ENCODE measurements at regions of chr12 and their contacts with region 1.

Region 1: DNA sequence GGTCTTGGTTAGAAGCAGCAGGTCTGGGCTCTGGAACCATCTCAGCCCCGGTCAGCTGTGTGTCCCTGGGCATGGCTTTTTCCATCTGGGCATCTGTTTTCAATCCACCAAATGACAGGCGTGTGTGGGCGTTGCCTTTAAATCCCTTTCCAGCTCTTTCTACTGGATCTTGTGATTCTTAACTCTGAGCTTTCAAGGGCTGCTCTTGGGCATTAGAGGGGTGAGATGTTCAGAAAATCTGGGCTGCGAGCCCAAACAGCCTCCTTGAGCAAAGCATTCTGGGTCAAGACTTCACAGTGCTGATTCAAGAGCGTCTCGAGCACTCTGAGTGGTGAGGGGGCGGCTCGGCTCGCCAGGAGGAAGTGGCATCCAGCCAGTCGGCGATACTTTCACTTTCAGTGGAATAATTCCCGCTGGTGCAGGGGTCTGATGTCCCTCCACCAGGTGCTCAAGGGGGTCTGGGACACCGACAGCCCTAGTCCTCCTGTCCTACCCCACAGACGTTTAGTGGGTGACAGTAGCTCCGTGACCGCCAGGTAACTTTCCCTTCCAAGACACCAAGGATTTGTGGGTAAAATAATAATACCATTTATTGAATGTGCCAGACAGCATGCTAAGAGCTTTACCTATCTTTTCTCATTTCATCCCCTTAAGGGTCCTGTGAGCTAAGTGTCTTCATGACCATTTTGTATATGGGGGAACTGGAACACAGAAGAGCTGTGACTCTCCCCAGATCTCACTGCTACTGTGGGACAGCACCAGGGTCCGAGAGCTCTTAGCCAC is 114.0 kb downstream of the PLXNC1 start:
- DNase-seq: peak; percentile 50 to 81 (median 72)
- ATAC-seq: peak; percentile 89
- H3K4me3 ChIP-seq: peak overlapping the region; percentile 94
- H3K4me3 Mint-ChIP-seq: peak overlapping the region; percentile 80 to 99 (median 97)
- H3K27ac ChIP-seq: peak overlapping the region; percentile 91
- H3K27ac Mint-ChIP-seq: peak overlapping the region; percentile 91 to 100 (median 99)
- H3K4me1 ChIP-seq: peaks cover 15 to 18% of the 10 kb centered on the region in 2 donors
- H3K4me1 Mint-ChIP-seq: peaks cover 23 to 52% (median 46%) of the 10 kb centered on the region in 7 donors
- H3K27me3 ChIP-seq: no peaks in the 10 kb centered on the region
- H3K27me3 Mint-ChIP-seq: no peaks in the 10 kb centered on the region

Region 2: DNA sequence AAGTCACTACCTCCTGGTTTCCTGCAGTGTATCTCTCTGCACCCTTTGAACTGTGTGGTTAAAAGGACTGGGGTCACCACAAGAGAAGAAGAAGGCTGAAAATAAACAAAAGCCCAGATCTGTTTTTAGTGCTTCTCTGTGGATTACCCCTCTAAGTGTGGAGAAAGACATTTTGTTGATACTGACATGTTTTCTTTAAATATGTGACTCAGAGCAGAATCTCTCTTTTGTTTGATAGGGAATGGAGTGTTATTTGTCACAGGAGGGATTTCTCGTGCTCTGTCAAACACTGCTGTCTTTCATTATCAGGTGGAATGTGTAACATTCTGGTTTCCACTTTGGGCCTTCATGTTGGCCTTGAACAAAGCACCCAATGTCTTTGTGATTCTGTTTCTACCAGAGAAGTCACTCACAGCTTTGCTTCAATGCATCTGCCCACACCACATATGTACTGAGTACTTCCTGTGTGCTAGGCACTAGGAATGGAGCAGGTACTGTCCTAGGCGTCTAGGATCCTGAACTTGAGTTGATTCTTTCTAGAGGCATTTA is 32.0 kb before region 1 on chr12:
- CTCF ChIA-PET with region 1: no interaction called
- POLR2A ChIA-PET with region 1: no interaction called
- intact Hi-C with region 1: loop called in 1 of 2 experiments (anchors 2 kb)
- DNase-seq: peak in 3 of 9 donors; percentile 3 to 16 (median 5)
- ATAC-seq: peak; percentile 52
- H3K4me3 ChIP-seq: no peak overlapping the region
- H3K4me3 Mint-ChIP-seq: peak overlapping the region in 8 of 10 donors; percentile 4 to 71 (median 47)
- H3K27ac ChIP-seq: no peak overlapping the region
- H3K27ac Mint-ChIP-seq: peak overlapping the region in 6 of 9 donors; percentile 55 to 82 (median 68)
- H3K4me1 ChIP-seq: peaks cover 6 to 10% of the 10 kb centered on the region in 2 donors
- H3K4me1 Mint-ChIP-seq: peaks cover 6 to 27% (median 13%) of the 10 kb centered on the region in 7 donors
- H3K27me3 ChIP-seq: no peaks in the 10 kb centered on the region
- H3K27me3 Mint-ChIP-seq: no peaks in the 10 kb centered on the region

Region 3: DNA sequence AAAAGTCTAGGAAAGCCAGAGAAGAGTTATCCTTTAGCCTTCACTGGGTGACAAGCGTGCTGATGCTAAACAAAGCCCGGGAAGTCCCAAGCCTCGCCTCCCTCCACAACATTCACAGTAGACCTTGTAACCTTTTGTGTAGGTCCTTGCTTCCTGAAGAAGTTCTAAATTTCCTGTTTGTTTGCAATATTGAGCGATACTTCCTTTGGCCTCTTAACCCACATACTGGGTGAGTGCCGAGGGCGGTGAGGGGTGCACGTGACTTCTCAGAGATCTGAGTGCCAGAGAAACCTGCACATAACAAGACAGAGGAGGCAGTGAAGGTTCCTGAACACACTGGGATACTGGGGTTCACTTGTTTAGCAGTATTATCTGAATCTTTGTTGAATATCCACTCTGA is 20.3 kb after region 1 on chr12:
- CTCF ChIA-PET with region 1: no interaction called
- POLR2A ChIA-PET with region 1: interaction called, 6 read pairs
- intact Hi-C with region 1: loop called in 1 of 2 experiments (anchors 1 kb)
- DNase-seq: peak in 7 of 9 donors; percentile 29 to 59 (median 39)
- ATAC-seq: peak; percentile 83
- H3K4me3 ChIP-seq: peak overlapping the region; percentile 31
- H3K4me3 Mint-ChIP-seq: peak overlapping the region; percentile 50 to 74 (median 68)
- H3K27ac ChIP-seq: peak overlapping the region; percentile 9
- H3K27ac Mint-ChIP-seq: peak overlapping the region; percentile 77 to 98 (median 88)
- H3K4me1 ChIP-seq: peaks cover 14 to 25% of the 10 kb centered on the region in 2 donors
- H3K4me1 Mint-ChIP-seq: peaks cover 21 to 33% (median 26%) of the 10 kb centered on the region in 7 donors
- H3K27me3 ChIP-seq: no peaks in the 10 kb centered on the region
- H3K27me3 Mint-ChIP-seq: no peaks in the 10 kb centered on the region

Region 4: GRCh38 chr12:94954029-94954685 is 691.7 kb after region 1 on chr12:
- CTCF ChIA-PET with region 1: no interaction called
- POLR2A ChIA-PET with region 1: no interaction called
- intact Hi-C with region 1: no loop called
- DNase-seq: no peak
- ATAC-seq: no peak
- H3K4me3 ChIP-seq: no peak overlapping the region
- H3K4me3 Mint-ChIP-seq: no peak overlapping the region
- H3K27ac ChIP-seq: no peak overlapping the region
- H3K27ac Mint-ChIP-seq: no peak overlapping the region
- H3K4me1 ChIP-seq: no peaks in the 10 kb centered on the region
- H3K4me1 Mint-ChIP-seq: peaks cover 0 to 15% (median 4%) of the 10 kb centered on the region in 7 donors
- H3K27me3 ChIP-seq: no peaks in the 10 kb centered on the region
- H3K27me3 Mint-ChIP-seq: peaks cover 7 to 33% (median 20%) of the 10 kb centered on the region in 5 donors